CD14-positive monocyte (primary cell): ENCODE measurements at regions of chr2 and their contacts with region 1.

Region 1: GRCh38 chr2:200811336-200812121 is at the start of gene BZW1:
- DNase-seq: peak; percentile 96 to 97 (median 97)
- H3K4me3 ChIP-seq: peak within 1 kb of the TSS; percentile 58 to 91 (median 85)
- H3K4me3 Mint-ChIP-seq: peak within 1 kb of the TSS; percentile 97 to 99
- H3K27ac ChIP-seq: peak within 1 kb of the TSS; percentile 95 to 98
- H3K27ac Mint-ChIP-seq: peak within 1 kb of the TSS; percentile 97 to 100 (median 99)
- H3K4me1 ChIP-seq: peaks cover 29 to 40% of the 10 kb centered on the region in 2 donors
- H3K4me1 Mint-ChIP-seq: peaks cover 37% of the 10 kb centered on the region
- H3K27me3 ChIP-seq: no peaks in the 10 kb centered on the region
- H3K27me3 Mint-ChIP-seq: no peaks in the 10 kb centered on the region
- CTCF ChIP-seq: no peak
- polyA plus RNA-seq, gene BZW1: 58.0 to 221 (median 202) TPM

Region 2: GRCh38 chr2:200525882-200526651 is 285.5 kb before region 1 on chr2 and contains the start of gene SGO2:
- intact Hi-C with region 1: loop called in 1 of 2 experiments (anchors 2 kb)
- DNase-seq: peak; percentile 91 to 97 (median 92)
- H3K4me3 ChIP-seq: peak within 1 kb of the TSS; percentile 86 to 97 (median 96)
- H3K4me3 Mint-ChIP-seq: peak within 1 kb of the TSS; percentile 89 to 90
- H3K27ac ChIP-seq: peak within 1 kb of the TSS; percentile 16 to 85
- H3K27ac Mint-ChIP-seq: peak within 1 kb of the TSS; percentile 67 to 90 (median 83)
- H3K4me1 ChIP-seq: peaks cover 14 to 26% of the 10 kb centered on the region in 2 donors
- H3K4me1 Mint-ChIP-seq: peaks cover 21% of the 10 kb centered on the region
- H3K27me3 ChIP-seq: peaks cover 0 to 3% of the 10 kb centered on the region in 2 donors
- H3K27me3 Mint-ChIP-seq: peaks cover 0 to 4% (median 3%) of the 10 kb centered on the region in 3 donors
- CTCF ChIP-seq: no peak
- polyA plus RNA-seq, gene SGO2: 0.49 to 1.5 (median 1.4) TPM

Region 3: GRCh38 chr2:200618587-200619021 is 192.9 kb before region 1 on chr2:
- intact Hi-C with region 1: loop called in 1 of 2 experiments (anchors 10 kb)
- DNase-seq: peak in 1 of 3 donors; percentile 21
- H3K4me3 ChIP-seq: no peak overlapping the region
- H3K4me3 Mint-ChIP-seq: peak overlapping the region in 1 of 2 donors; percentile 33
- H3K27ac ChIP-seq: peak overlapping the region in 1 of 2 donors; percentile 5
- H3K27ac Mint-ChIP-seq: no peak overlapping the region
- H3K4me1 ChIP-seq: peaks cover 36 to 43% of the 10 kb centered on the region in 2 donors
- H3K4me1 Mint-ChIP-seq: peaks cover 39% of the 10 kb centered on the region
- H3K27me3 ChIP-seq: no peaks in the 10 kb centered on the region
- H3K27me3 Mint-ChIP-seq: no peaks in the 10 kb centered on the region
- CTCF ChIP-seq: peak; percentile 23

Region 4: GRCh38 chr2:200713003-200713703 is 98.4 kb before region 1 on chr2:
- intact Hi-C with region 1: loop called (anchors 5 kb)
- DNase-seq: peak; percentile 97 to 100 (median 98)
- H3K4me3 ChIP-seq: peak overlapping the region; percentile 3 to 58 (median 15)
- H3K4me3 Mint-ChIP-seq: peak overlapping the region; percentile 74 to 86
- H3K27ac ChIP-seq: peak overlapping the region; percentile 57 to 90
- H3K27ac Mint-ChIP-seq: peak overlapping the region; percentile 91 to 98 (median 96)
- H3K4me1 ChIP-seq: peaks cover 5 to 7% of the 10 kb centered on the region in 2 donors
- H3K4me1 Mint-ChIP-seq: peaks cover 9% of the 10 kb centered on the region
- H3K27me3 ChIP-seq: no peaks in the 10 kb centered on the region
- H3K27me3 Mint-ChIP-seq: peaks cover 0 to 3% (median 0%) of the 10 kb centered on the region in 3 donors
- CTCF ChIP-seq: peak; percentile 84

Region 5: GRCh38 chr2:200850512-200851256 is 39.2 kb after region 1 on chr2:
- intact Hi-C with region 1: loop called in 1 of 2 experiments (anchors 5 kb)
- DNase-seq: no peak
- H3K4me3 ChIP-seq: no peak overlapping the region
- H3K4me3 Mint-ChIP-seq: no peak overlapping the region
- H3K27ac ChIP-seq: no peak overlapping the region
- H3K27ac Mint-ChIP-seq: peak overlapping the region in 5 of 7 donors; percentile 27 to 86 (median 65)
- H3K4me1 ChIP-seq: no peaks in the 10 kb centered on the region
- H3K4me1 Mint-ChIP-seq: peaks cover 2% of the 10 kb centered on the region
- H3K27me3 ChIP-seq: no peaks in the 10 kb centered on the region
- H3K27me3 Mint-ChIP-seq: peaks cover 0 to 2% (median 1%) of the 10 kb centered on the region in 3 donors
- CTCF ChIP-seq: no peak

Region 6: DNA sequence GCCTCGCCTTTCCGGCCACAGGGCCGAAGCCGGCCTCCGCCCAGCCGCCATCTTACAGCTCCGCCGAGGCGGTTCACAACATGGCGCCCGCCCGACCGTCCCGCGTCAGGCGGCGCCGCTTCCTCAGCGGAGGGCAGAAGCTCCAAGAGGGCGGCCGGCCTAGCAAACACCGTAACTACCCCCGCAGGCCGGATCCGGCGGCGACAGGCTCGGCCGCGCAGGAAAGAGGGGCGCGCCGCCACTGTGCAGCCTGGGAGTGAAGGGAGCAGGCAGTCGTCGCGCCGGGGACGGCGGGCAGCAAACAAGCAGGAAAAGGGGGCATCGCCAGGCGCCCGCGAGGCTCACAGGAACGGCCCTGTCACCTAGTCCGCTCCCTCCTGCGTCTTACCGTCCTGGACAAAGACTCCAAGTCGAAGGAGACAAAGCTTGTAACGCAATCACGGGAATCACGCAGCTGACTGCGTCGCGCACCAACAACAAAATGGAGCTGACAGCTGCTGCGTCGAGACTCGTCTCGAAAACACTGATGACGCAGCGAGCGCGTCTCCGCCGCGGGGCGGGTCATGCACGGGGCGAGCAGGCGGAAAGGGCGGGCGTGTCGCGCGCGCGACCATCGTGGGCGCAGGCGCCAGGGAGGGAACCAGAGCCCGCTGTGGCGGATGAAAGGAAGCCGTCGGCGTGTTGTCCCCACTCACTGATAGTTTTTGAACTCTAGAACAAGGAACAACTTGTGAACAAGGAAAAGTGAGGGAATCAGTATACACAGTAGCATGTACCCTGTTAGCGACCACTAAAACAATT is 52.8 kb after region 1 on chr2 and contains the start of gene CLK1:
- intact Hi-C with region 1: loop called (anchors 5 kb)
- DNase-seq: peak; percentile 93 to 97 (median 96)
- H3K4me3 ChIP-seq: peak within 1 kb of the TSS; percentile 79 to 88 (median 86)
- H3K4me3 Mint-ChIP-seq: peak within 1 kb of the TSS; percentile 89 to 97
- H3K27ac ChIP-seq: peak within 1 kb of the TSS; percentile 100
- H3K27ac Mint-ChIP-seq: peak within 1 kb of the TSS; percentile 98 to 100 (median 100)
- H3K4me1 ChIP-seq: peaks cover 40 to 59% of the 10 kb centered on the region in 2 donors
- H3K4me1 Mint-ChIP-seq: peaks cover 48% of the 10 kb centered on the region
- H3K27me3 ChIP-seq: no peaks in the 10 kb centered on the region
- H3K27me3 Mint-ChIP-seq: no peaks in the 10 kb centered on the region
- CTCF ChIP-seq: no peak
- polyA plus RNA-seq, gene CLK1: 7.5 to 383 (median 8.2) TPM

Region 7: DNA sequence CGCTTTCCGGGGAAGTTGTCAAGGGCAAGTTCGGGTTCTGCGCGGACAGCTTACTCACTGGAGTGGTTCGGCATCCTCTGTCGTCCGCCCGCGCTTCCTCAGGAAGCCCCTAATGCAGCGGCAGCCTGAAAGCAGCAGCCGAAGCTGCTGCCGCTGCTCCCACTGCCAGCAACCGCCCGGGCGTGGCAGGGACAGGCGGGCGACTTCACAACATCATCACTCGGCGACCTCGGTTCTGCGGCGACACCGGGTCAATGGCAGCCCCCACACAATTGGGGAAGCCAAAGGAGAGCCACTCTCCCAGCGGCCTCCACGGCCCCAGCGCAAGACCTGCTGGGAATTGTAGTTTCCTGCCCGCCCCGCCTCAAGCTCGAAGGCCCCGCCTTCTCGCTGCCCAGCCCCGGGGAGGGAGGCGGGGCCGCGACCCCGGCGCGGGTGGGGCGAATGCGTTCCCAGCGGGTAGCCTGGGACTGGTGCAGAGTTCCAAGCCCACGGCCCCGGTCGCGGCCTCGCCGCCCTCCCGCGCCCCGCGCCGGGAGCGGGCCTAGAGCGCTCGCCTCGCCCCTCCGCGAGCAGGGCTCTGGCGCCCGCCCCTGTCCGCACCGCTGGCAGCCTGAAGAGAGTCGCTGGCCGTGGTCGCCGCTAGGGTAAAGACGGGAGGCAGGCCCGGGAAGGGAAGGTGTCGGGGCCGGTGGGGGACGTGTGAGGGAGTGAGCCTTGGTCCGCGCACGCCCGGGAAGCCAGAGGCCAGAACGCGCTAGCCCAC is 639.9 kb after region 1 on chr2 and contains the starts of genes STRADB and TRAK2:
- intact Hi-C with region 1: loop called in 1 of 2 experiments (anchors 5 kb)
- DNase-seq: peak; percentile 91 to 96 (median 94)
- H3K4me3 ChIP-seq: peak within 1 kb of the TSS; percentile 76 to 94 (median 82)
- H3K4me3 Mint-ChIP-seq: peak within 1 kb of the TSS; percentile 94 to 97
- H3K27ac ChIP-seq: peak within 1 kb of the TSS; percentile 79 to 90
- H3K27ac Mint-ChIP-seq: peak within 1 kb of the TSS; percentile 91 to 99 (median 96)
- H3K4me1 ChIP-seq: peaks cover 12 to 19% of the 10 kb centered on the region in 2 donors
- H3K4me1 Mint-ChIP-seq: peaks cover 22% of the 10 kb centered on the region
- H3K27me3 ChIP-seq: no peaks in the 10 kb centered on the region
- H3K27me3 Mint-ChIP-seq: peaks cover 0 to 2% (median 2%) of the 10 kb centered on the region in 3 donors
- CTCF ChIP-seq: peak; percentile 30
- polyA plus RNA-seq, gene STRADB: 6.9 to 25.6 (median 22.0) TPM
- polyA plus RNA-seq, gene TRAK2: 7.6 to 16.8 (median 15.3) TPM